CD8-positive, alpha-beta memory T cell (primary cell): ENCODE measurements at regions of chr2 and their contacts with region 1.

Region 1: DNA sequence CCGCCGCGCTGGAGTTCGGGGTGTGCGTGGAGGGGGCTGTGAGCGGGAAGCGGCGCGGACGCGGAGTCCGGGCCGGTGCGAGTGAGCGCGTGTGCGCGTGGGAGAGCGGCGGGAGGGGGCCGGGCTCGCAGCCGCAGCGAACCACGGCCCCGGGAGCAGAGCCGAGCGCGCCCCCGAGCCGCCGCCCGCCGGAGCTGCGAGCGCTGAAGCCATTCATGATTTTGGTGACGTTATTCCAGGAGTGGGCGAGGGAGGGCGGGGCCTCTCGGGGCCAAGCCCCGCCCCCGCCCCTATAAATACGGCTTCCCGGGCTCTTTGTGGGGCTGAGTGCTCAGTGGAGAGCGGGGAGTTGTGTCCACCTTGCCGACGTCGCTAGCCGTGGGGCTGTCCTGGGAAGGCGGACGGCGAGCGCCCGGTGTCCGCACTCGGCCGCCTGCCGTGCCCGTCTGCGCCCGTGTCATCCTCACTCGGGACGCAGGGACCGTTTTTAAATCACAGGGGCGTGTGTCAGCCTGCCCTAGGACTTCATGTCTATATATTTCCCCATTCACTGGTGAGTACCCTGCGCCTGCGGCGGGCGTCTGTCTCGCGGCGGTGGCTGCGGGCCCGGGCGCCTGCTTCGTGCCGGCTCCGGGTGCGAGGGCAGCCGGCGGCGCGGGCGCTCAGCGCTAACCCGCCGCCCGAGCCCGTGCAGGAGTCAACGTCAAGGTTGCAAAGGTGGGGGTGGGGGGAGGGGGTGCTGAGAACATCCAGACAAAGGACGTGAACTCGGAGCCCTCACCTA is at the start of gene LBH:
- DNase-seq: peak; percentile 85 to 96 (median 87)
- H3K4me3 ChIP-seq: peak within 1 kb of the TSS; percentile 88
- H3K4me3 Mint-ChIP-seq: peak within 1 kb of the TSS; percentile 88 to 96 (median 94)
- H3K27ac ChIP-seq: peak within 1 kb of the TSS; percentile 97
- H3K27ac Mint-ChIP-seq: peak within 1 kb of the TSS; percentile 86 to 98 (median 94)
- H3K4me1 ChIP-seq: peaks cover 54% of the 10 kb centered on the region
- H3K4me1 Mint-ChIP-seq: peaks cover 56 to 68% (median 65%) of the 10 kb centered on the region in 3 donors
- H3K27me3 ChIP-seq: no peaks in the 10 kb centered on the region
- H3K27me3 Mint-ChIP-seq: peaks cover 0 to 7% of the 10 kb centered on the region in 2 donors
- total RNA-seq, gene LBH: 115 to 121 TPM

Region 2: DNA sequence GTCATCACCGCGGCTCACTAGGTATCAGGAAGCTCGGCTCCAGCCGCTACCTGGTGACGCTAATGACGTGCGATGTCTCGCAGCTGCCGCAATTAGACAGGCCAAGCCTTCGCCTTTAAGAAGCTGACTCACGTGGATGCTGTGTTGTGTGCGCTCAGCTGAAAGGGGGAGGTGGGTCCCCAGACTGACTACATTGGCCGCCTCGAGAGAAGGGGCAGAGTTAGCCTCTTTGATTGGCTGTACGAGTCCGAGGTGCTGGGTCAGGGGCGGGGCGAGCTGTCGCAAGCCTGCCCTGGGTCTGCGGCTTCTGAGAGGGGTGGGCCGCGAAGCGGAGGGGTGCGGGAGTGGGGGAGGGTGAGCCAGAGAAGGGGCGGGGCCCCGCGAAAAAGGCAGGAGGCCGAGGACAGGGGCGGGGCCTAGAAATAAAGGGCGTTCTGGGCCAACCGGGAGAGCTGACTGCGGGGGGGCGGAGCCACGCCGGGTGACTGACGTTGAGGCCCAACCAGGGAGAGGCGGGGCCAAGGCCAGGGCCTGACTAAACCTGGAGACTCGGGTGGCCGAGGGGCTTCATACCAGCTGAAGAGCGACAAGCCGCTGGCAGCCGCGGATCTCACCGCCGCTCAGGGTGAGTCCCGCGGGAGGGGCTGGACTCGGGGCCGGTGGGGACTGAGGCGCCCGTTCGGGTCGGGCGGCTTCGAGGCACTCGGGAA is 84.8 kb before region 1 on chr2 and contains the start of gene YPEL5:
- CTCF ChIA-PET with region 1: interaction called, 19 read pairs
- POLR2A ChIA-PET with region 1: interaction called, 83 read pairs
- DNase-seq: peak; percentile 99 to 100 (median 99)
- H3K4me3 ChIP-seq: peak within 1 kb of the TSS; percentile 71
- H3K4me3 Mint-ChIP-seq: peak within 1 kb of the TSS; percentile 86 to 94 (median 90)
- H3K27ac ChIP-seq: peak within 1 kb of the TSS; percentile 100
- H3K27ac Mint-ChIP-seq: peak within 1 kb of the TSS; percentile 98 to 100 (median 99)
- H3K4me1 ChIP-seq: peaks cover 51% of the 10 kb centered on the region
- H3K4me1 Mint-ChIP-seq: peaks cover 45 to 57% (median 50%) of the 10 kb centered on the region in 3 donors
- H3K27me3 ChIP-seq: no peaks in the 10 kb centered on the region
- H3K27me3 Mint-ChIP-seq: peaks cover 0 to 7% of the 10 kb centered on the region in 2 donors
- total RNA-seq, gene YPEL5: 35.7 to 38.3 TPM

Region 3: GRCh38 chr2:30208452-30208851 is 23.0 kb before region 1 on chr2:
- CTCF ChIA-PET with region 1: interaction called, 285 read pairs
- POLR2A ChIA-PET with region 1: interaction called, 34 read pairs
- DNase-seq: peak in 3 of 5 donors; percentile 19 to 42 (median 38)
- H3K4me3 ChIP-seq: peak overlapping the region; percentile 13
- H3K4me3 Mint-ChIP-seq: peak overlapping the region in 5 of 7 donors; percentile 24 to 74 (median 59)
- H3K27ac ChIP-seq: no peak overlapping the region
- H3K27ac Mint-ChIP-seq: peak overlapping the region; percentile 20 to 93 (median 62)
- H3K4me1 ChIP-seq: peaks cover 26% of the 10 kb centered on the region
- H3K4me1 Mint-ChIP-seq: peaks cover 18 to 22% (median 19%) of the 10 kb centered on the region in 3 donors
- H3K27me3 ChIP-seq: no peaks in the 10 kb centered on the region
- H3K27me3 Mint-ChIP-seq: no peaks in the 10 kb centered on the region

Region 4: GRCh38 chr2:30336978-30337841 is 105.8 kb after region 1 on chr2:
- CTCF ChIA-PET with region 1: interaction called, 11 read pairs
- POLR2A ChIA-PET with region 1: interaction called, 40 read pairs
- DNase-seq: peak in 4 of 5 donors; percentile 24 to 70 (median 58)
- H3K4me3 ChIP-seq: peak overlapping the region; percentile 40
- H3K4me3 Mint-ChIP-seq: peak overlapping the region; percentile 44 to 91 (median 85)
- H3K27ac ChIP-seq: peak overlapping the region; percentile 55
- H3K27ac Mint-ChIP-seq: peak overlapping the region; percentile 92 to 100 (median 97)
- H3K4me1 ChIP-seq: peaks cover 67% of the 10 kb centered on the region
- H3K4me1 Mint-ChIP-seq: peaks cover 66 to 75% (median 70%) of the 10 kb centered on the region in 3 donors
- H3K27me3 ChIP-seq: no peaks in the 10 kb centered on the region
- H3K27me3 Mint-ChIP-seq: no peaks in the 10 kb centered on the region

Region 5: DNA sequence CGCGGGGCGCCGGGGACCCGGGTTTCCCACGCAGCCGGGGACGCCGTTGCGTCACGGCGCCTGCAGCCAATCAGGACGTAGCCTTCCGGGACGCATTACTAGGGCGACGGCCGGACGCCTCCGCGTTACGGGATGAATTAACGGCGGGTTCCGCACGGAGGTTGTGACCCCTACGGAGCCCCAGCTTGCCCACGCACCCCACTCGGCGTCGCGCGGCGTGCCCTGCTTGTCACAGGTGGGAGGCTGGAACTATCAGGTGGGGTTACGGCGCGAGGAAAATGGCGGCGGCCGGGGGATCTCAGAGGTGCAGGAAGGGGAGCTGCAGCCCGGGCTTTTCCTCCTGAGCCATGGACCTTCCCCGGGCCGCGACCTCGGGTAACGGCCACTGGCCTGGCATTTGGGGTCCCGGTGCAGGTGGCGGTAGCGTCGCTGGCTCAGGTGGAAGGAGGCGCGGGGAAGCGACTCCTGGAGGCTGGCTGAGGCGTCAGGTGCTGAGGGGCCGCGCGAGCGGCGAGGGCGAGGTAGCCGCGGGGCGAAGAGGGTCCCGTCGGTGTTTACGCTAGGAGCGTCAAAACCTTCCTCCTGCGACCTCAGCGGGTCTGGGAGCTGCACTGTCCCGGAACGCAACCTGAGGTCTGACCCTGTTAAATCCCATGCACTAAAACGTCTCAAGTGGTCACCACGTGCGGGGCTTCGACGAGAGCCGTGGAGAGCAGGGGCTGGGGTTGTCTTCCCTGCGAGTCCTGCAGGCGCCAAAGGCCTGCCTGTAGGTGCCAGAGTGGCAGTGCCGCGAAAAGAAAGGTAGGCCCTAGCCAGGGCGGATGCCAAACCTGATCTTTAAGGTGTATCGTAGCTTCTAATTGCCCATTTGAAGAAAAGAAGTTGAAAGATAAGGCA is 216.0 kb after region 1 on chr2 and contains the start of gene LCLAT1:
- CTCF ChIA-PET with region 1: interaction called, 19 read pairs
- POLR2A ChIA-PET with region 1: interaction called, 15 read pairs
- DNase-seq: peak; percentile 81 to 90 (median 88)
- H3K4me3 ChIP-seq: peak within 1 kb of the TSS; percentile 75
- H3K4me3 Mint-ChIP-seq: peak within 1 kb of the TSS; percentile 91 to 98 (median 96)
- H3K27ac ChIP-seq: peak within 1 kb of the TSS; percentile 84
- H3K27ac Mint-ChIP-seq: peak within 1 kb of the TSS; percentile 96 to 99 (median 98)
- H3K4me1 ChIP-seq: peaks cover 21% of the 10 kb centered on the region
- H3K4me1 Mint-ChIP-seq: peaks cover 34 to 47% (median 43%) of the 10 kb centered on the region in 3 donors
- H3K27me3 ChIP-seq: no peaks in the 10 kb centered on the region
- H3K27me3 Mint-ChIP-seq: no peaks in the 10 kb centered on the region
- total RNA-seq, gene LCLAT1: 29.9 to 31.0 TPM